Caki2 (cell line): ENCODE measurements at regions of chr2 and their contacts with region 1.

Region 1: DNA sequence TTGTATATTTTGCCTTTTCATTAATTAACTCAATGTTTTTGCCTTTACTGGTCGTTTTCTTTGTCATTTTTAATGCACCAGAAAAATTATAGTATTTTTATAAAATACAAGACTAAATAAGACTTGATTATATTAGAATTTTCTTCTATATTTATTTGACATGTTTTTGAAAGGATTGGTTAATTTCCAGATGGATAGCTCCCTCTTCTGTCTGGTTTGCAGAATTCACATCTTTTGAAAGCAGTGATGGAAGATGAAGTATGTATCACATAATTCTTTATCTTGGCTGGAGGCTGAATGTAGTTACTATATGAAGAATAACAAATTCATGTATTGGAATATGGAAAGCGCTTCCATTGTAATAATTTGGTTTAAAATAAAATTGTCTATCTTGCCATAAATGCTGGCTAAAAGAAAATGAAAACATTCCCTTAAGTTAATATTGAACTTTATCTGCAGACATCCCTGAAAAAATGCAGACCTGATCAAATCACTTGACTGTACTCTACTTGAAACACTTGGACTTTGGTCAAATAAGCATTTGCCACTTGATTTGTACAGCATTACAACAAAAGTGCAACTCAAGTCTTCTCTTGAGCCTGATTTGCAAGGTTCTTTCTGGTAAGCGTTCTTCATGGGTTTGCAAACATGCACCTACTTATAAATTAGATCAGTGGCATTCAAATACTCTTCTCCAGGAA is 86.3 kb upstream of the EFEMP1 start:
- DNase-seq: peak; percentile 41

Region 2: DNA sequence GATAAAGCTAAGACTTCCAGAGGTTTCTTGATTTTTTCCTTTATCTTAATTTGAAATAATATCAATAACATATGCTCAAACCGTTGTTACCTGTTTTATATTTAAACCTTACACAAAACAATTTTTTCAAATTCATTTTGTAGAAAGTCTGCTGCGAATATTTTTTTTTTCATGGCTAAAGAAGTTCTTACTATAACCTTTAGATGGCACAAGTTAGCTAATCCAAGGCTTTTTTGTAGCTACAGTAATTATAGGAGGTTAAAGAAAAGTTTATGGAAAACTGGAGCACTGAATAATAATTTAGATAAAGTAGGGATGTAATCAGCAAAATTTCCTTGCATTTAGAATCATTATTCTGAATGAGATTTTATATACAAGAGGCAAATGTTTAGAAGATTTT is 238.3 kb before region 1 on chr2:
- in situ Hi-C with region 1: loop called (anchors 25 kb)
- DNase-seq: peak; percentile 39

Region 3: GRCh38 chr2:55961318-55961911 is 48.5 kb before region 1 on chr2:
- in situ Hi-C with region 1: loop called (anchors 5 kb)
- DNase-seq: peak; percentile 53